WTC11 (cell line): ENCODE measurements at regions of chr19 and their contacts with region 1.

Region 1: GRCh38 chr19:38402967-38403861 is at the start of gene FAM98C:
- DNase-seq: peak; percentile 97
- ATAC-seq: peak; percentile 94
- H3K4me3 Mint-ChIP-seq: peak within 1 kb of the TSS; percentile 77
- H3K27ac Mint-ChIP-seq: no peak within 1 kb of the TSS
- H3K4me1 Mint-ChIP-seq: no peaks in the 10 kb centered on the region
- H3K27me3 Mint-ChIP-seq: peaks cover 57% of the 10 kb centered on the region
- CTCF ChIP-seq: peak; percentile 98
- total RNA-seq, gene FAM98C: 9.7 to 12.2 TPM (median 10.2 TPM) in 3 replicates

Region 2: GRCh38 chr19:38263689-38264485 is 139.3 kb before region 1 on chr19:
- CTCF ChIA-PET with region 1: interaction called, 14 read pairs
- POLR2A ChIA-PET with region 1: no interaction called
- DNase-seq: peak; percentile 97
- ATAC-seq: peak; percentile 89
- H3K4me3 Mint-ChIP-seq: peak overlapping the region; percentile 63
- H3K27ac Mint-ChIP-seq: peak overlapping the region; percentile 97
- H3K4me1 Mint-ChIP-seq: peaks cover 51% of the 10 kb centered on the region
- H3K27me3 Mint-ChIP-seq: no peaks in the 10 kb centered on the region
- CTCF ChIP-seq: no peak

Region 3: GRCh38 chr19:38387550-38388348 is 15.5 kb before region 1 on chr19 and contains the start of gene GGN:
- CTCF ChIA-PET with region 1: interaction called, 110 read pairs
- POLR2A ChIA-PET with region 1: interaction called, 11 read pairs
- DNase-seq: peak; percentile 98
- ATAC-seq: peak; percentile 77
- H3K4me3 Mint-ChIP-seq: peak within 1 kb of the TSS; percentile 85
- H3K27ac Mint-ChIP-seq: peak within 1 kb of the TSS; percentile 97
- H3K4me1 Mint-ChIP-seq: peaks cover 28% of the 10 kb centered on the region
- H3K27me3 Mint-ChIP-seq: peaks cover 3% of the 10 kb centered on the region; the same call in 1 of the 2 replicates
- CTCF ChIP-seq: no peak
- total RNA-seq, gene GGN: 2.4 to 3.1 TPM (median 2.7 TPM) in 3 replicates

Region 4: GRCh38 chr19:38441657-38442348 is 38.6 kb after region 1 on chr19:
- CTCF ChIA-PET with region 1: interaction called, 69 read pairs
- POLR2A ChIA-PET with region 1: interaction called, 4 read pairs
- DNase-seq: peak; percentile 51
- ATAC-seq: peak; percentile 97
- H3K4me3 Mint-ChIP-seq: no peak overlapping the region
- H3K27ac Mint-ChIP-seq: peak overlapping the region; percentile 37; the same call in 1 of the 2 replicates
- H3K4me1 Mint-ChIP-seq: peaks cover 13% of the 10 kb centered on the region
- H3K27me3 Mint-ChIP-seq: no peaks in the 10 kb centered on the region
- CTCF ChIP-seq: no peak

Region 5: DNA sequence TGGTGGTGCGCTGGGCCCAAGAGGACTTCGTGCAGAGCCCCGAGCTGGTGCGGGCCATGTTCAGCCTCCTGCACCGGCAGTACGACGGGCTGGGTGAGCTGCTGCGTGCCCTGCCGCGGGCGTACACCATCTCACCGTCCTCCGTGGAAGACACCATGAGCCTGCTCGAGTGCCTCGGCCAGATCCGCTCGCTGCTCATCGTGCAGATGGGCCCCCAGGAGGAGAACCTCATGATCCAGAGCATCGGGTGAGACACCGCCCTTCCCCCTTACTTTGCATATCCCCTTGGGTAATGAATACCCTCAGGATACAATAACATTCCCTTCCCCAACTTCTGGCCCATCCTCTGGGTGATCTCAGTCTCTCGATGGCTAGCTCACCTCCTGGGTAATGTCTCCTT is 91.2 kb after region 1 on chr19:
- CTCF ChIA-PET with region 1: interaction called, 18 read pairs
- POLR2A ChIA-PET with region 1: no interaction called
- DNase-seq: no peak
- ATAC-seq: peak; percentile 75
- H3K4me3 Mint-ChIP-seq: no peak overlapping the region
- H3K27ac Mint-ChIP-seq: peak overlapping the region; percentile 69
- H3K4me1 Mint-ChIP-seq: peaks cover 15% of the 10 kb centered on the region
- H3K27me3 Mint-ChIP-seq: no peaks in the 10 kb centered on the region
- CTCF ChIP-seq: no peak

Region 6: GRCh38 chr19:38523319-38523718 is 120.1 kb after region 1 on chr19:
- CTCF ChIA-PET with region 1: no interaction called
- POLR2A ChIA-PET with region 1: no interaction called
- DNase-seq: no peak
- ATAC-seq: no peak
- H3K4me3 Mint-ChIP-seq: no peak overlapping the region
- H3K27ac Mint-ChIP-seq: no peak overlapping the region
- H3K4me1 Mint-ChIP-seq: 0 out of 2 replicates have a peak, but pooled peaks cover 2% of the 10 kb centered on the region
- H3K27me3 Mint-ChIP-seq: no peaks in the 10 kb centered on the region
- CTCF ChIP-seq: no peak

Region 7: GRCh38 chr19:38596057-38596981 is 193.1 kb after region 1 on chr19:
- CTCF ChIA-PET with region 1: interaction called, 36 read pairs
- POLR2A ChIA-PET with region 1: interaction called, 4 read pairs
- DNase-seq: peak; percentile 98
- ATAC-seq: peak; percentile 90
- H3K4me3 Mint-ChIP-seq: peak overlapping the region; percentile 91
- H3K27ac Mint-ChIP-seq: peak overlapping the region; percentile 98
- H3K4me1 Mint-ChIP-seq: peaks cover 8% of the 10 kb centered on the region
- H3K27me3 Mint-ChIP-seq: peaks cover 7% of the 10 kb centered on the region; the same call in 1 of the 2 replicates
- CTCF ChIP-seq: no peak

Region 8: GRCh38 chr19:38718747-38719543 is 315.7 kb after region 1 on chr19:
- CTCF ChIA-PET with region 1: interaction called, 17 read pairs
- POLR2A ChIA-PET with region 1: no interaction called
- DNase-seq: peak; percentile 67
- ATAC-seq: peak; percentile 90
- H3K4me3 Mint-ChIP-seq: no peak overlapping the region
- H3K27ac Mint-ChIP-seq: peak overlapping the region; percentile 60; the same call in 1 of the 2 replicates
- H3K4me1 Mint-ChIP-seq: peaks cover 5% of the 10 kb centered on the region
- H3K27me3 Mint-ChIP-seq: no peaks in the 10 kb centered on the region
- CTCF ChIP-seq: no peak